ENCODE measurements at regions of chr1 and their contacts with region 1.

Region 1: DNA sequence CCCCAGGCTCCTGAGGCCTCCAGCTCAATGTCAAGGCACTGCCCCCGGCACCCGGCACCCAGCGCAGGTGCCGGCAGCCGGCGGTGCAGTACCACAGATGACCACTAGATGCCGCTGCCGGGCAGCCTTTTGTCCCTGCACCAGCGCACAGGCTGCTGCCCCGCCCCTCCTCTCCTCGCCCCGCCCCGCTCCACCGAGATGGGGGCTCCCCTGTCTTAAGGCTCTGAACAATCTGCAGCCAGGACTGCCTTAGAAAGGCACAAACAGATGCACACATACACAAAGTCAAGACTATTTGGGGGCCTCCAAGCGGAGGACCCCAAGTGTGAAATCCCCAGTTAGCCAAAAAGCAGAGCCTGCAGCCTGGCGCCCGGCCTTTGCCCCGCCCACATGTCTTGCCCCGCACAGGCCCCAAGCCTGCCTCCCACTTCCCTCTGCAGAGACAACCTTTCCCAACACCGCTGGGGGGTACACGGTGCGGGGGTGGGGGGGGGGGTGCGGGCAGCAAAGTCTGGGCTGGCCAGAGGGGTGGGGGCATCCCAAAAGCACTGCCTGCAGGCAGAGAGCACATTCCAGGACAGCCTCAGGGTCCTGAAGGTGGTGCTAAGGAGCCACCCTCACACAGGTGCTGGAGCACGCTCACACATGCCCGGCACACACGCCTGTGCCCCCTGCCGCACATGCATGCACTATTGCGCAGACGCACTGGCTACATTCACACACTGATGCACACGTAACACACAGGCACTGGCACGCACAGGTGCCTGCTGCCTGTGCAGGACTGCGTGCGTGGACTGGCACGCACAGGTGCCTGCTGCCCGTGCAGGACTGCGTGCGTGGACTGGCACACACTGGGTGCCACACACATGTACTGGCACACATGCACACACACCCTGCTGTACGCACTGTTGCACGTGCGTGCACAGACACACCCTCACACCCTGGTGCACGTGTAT is 37.1 kb downstream of the ARHGEF16 start:
- DNase-seq: peak; percentile 44 to 97
- H3K4me3 ChIP-seq: peak overlapping the region in 1 of 4 experiments; percentile 53; a peak in 2 of 8 replicates
- H3K27ac ChIP-seq: no peak overlapping the region; the same call in 1 of the 2 replicates
- H3K4me1 ChIP-seq: peaks cover 0 to 4% (median 0%) of the 10 kb centered on the region in 4 experiments; a peak in 2 of 7 replicates
- H3K27me3 ChIP-seq: no peaks in the 10 kb centered on the region
- CTCF ChIP-seq: peak in 2 of 3 experiments; percentile 78 to 93; a peak in 3 of 4 replicates
- EP300 ChIP-seq: no peak
- POLR2A ChIP-seq: no peak
- RAD21 ChIP-seq: peak; percentile 81 to 88

Region 2: DNA sequence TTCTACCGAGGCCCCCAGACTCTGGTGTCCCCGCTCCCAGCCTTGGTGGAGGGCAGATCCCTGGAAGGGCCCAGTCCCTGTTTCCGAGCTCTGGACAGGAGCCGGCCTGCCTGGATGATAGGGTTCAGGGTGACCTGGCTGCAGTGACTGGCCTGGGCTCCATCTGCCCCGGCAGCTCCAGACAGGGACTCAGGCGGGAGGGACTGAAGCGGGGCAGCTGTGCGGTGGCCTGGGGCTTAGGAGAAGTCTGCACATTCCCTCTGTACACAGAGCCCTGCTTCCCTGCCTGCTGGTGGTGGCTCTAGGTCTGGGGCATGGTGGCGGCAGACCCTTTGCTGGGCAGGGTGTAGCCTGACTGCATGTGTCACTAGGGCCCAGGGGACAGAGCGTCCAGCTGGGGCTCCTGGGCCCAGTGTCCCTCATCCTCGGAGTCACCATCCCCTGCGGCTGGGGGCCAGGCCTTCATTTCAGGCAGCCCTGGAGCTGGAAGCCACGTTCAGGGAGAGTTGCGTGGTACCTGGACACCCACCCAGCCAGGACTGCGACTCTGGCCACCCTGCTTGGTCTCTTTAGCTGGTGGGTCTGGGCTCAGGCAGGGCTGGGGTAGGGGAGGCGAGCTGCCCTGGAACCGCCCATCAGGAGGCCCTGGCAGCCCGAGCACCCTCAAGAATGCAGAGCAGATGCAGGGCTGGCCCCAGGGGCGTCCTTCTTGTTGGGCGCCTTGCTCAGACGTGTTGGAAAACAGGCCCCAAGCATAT is 27.5 kb before region 1 on chr1:
- CTCF ChIA-PET with region 1: interaction called, 11 read pairs
- POLR2A ChIA-PET with region 1: no interaction called
- DNase-seq: no peak
- H3K4me3 ChIP-seq: no peak overlapping the region
- H3K27ac ChIP-seq: no peak overlapping the region; the same call in 1 of the 2 replicates
- H3K4me1 ChIP-seq: no peaks in the 10 kb centered on the region
- H3K27me3 ChIP-seq: no peaks in the 10 kb centered on the region
- CTCF ChIP-seq: no peak
- EP300 ChIP-seq: no peak
- POLR2A ChIP-seq: no peak
- RAD21 ChIP-seq: no peak

Region 3: GRCh38 chr1:3471302-3472087 is 20.1 kb before region 1 on chr1:
- CTCF ChIA-PET with region 1: interaction called, 12 read pairs
- POLR2A ChIA-PET with region 1: interaction called, 3 read pairs
- DNase-seq: peak; percentile 73 to 74
- H3K4me3 ChIP-seq: 0 out of 8 replicates have a peak overlapping the region, but pooled peaks of 1 of the 4 experiments have one; percentile 11
- H3K27ac ChIP-seq: peak overlapping the region; percentile 75
- H3K4me1 ChIP-seq: peaks cover 0 to 22% (median 16%) of the 10 kb centered on the region in 4 experiments; a peak in 6 of 7 replicates
- H3K27me3 ChIP-seq: no peaks in the 10 kb centered on the region
- CTCF ChIP-seq: peak in 2 of 3 experiments; percentile 47 to 61; a peak in 3 of 4 replicates
- EP300 ChIP-seq: peak in 1 of 2 experiments; percentile 52; a peak in 1 of 3 replicates
- POLR2A ChIP-seq: no peak
- RAD21 ChIP-seq: peak; percentile 44 to 59

Region 4: GRCh38 chr1:3501856-3502665 is 10.5 kb after region 1 on chr1:
- CTCF ChIA-PET with region 1: interaction called, 12 read pairs
- POLR2A ChIA-PET with region 1: interaction called, 3 read pairs
- DNase-seq: peak; percentile 57 to 92
- H3K4me3 ChIP-seq: no peak overlapping the region
- H3K27ac ChIP-seq: no peak overlapping the region
- H3K4me1 ChIP-seq: no peaks in the 10 kb centered on the region
- H3K27me3 ChIP-seq: no peaks in the 10 kb centered on the region
- CTCF ChIP-seq: no peak
- EP300 ChIP-seq: no peak
- POLR2A ChIP-seq: no peak
- RAD21 ChIP-seq: no peak

Measured in H1 (cell line).